ENCODE measurements at regions of chr3 and their contacts with region 1.

Region 1: GRCh38 chr3:36911990-36912804 is 32.7 kb downstream of the TRANK1 start:
- DNase-seq: peak; percentile 66
- H3K4me3 Mint-ChIP-seq: peak overlapping the region; percentile 25
- H3K27ac Mint-ChIP-seq: peak overlapping the region; percentile 41
- H3K4me1 Mint-ChIP-seq: peaks cover 43% of the 10 kb centered on the region
- H3K27me3 Mint-ChIP-seq: no peaks in the 10 kb centered on the region

Region 2: DNA sequence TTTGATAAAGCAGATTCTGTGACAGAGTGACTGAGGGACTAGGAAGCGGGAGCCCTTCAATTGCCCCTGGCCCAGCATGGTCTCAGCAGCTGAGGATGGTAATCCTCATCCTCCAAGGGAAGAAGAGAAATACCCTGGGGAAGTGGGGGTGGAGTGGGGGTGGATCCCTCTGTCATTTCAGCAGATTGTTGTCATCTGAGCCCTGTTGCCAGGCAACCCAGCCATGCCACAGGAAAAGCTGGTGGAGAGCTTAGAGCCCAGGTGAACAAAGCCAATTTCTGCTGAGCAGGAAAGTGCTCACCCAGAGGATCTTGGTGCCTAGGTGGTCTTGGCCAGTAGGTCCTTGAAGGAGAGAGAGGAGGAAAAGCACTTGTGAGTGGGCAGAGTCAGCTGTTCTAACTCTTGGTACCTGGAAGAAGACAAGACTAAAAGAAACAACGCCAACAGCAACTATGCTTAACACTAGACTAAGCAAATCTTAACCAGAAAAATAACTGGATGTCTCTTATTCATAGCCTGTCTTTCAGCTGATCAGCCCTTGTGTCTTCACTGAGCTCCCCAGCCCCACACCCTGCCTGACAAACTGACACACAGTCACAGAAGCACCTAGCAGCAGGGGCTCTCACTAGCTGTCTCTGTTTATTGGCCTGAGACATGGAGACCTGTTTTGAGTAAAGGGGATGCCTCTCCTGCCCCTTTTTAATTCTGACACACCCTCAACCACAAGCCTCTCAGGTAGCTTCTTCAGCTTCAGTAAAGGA is 107.7 kb before region 1 on chr3:
- CTCF ChIA-PET with region 1: no interaction called
- intact Hi-C with region 1: no loop called
- DNase-seq: no peak
- H3K4me3 Mint-ChIP-seq: no peak overlapping the region
- H3K27ac Mint-ChIP-seq: no peak overlapping the region
- H3K4me1 Mint-ChIP-seq: no peaks in the 10 kb centered on the region
- H3K27me3 Mint-ChIP-seq: peaks cover 10% of the 10 kb centered on the region

Region 3: GRCh38 chr3:36843065-36844051 is 68.8 kb before region 1 on chr3:
- CTCF ChIA-PET with region 1: no interaction called
- intact Hi-C with region 1: loop called (anchors 2 kb)
- DNase-seq: peak; percentile 91
- H3K4me3 Mint-ChIP-seq: no peak overlapping the region
- H3K27ac Mint-ChIP-seq: peak overlapping the region; percentile 2
- H3K4me1 Mint-ChIP-seq: peaks cover 17% of the 10 kb centered on the region
- H3K27me3 Mint-ChIP-seq: no peaks in the 10 kb centered on the region

Region 4: GRCh38 chr3:36893137-36893557 is 19.1 kb before region 1 on chr3:
- CTCF ChIA-PET with region 1: interaction called, 5 read pairs
- intact Hi-C with region 1: loop called (anchors 1 kb)
- DNase-seq: peak; percentile 55
- H3K4me3 Mint-ChIP-seq: no peak overlapping the region
- H3K27ac Mint-ChIP-seq: peak overlapping the region; percentile 72
- H3K4me1 Mint-ChIP-seq: peaks cover 41% of the 10 kb centered on the region
- H3K27me3 Mint-ChIP-seq: no peaks in the 10 kb centered on the region

Region 5: DNA sequence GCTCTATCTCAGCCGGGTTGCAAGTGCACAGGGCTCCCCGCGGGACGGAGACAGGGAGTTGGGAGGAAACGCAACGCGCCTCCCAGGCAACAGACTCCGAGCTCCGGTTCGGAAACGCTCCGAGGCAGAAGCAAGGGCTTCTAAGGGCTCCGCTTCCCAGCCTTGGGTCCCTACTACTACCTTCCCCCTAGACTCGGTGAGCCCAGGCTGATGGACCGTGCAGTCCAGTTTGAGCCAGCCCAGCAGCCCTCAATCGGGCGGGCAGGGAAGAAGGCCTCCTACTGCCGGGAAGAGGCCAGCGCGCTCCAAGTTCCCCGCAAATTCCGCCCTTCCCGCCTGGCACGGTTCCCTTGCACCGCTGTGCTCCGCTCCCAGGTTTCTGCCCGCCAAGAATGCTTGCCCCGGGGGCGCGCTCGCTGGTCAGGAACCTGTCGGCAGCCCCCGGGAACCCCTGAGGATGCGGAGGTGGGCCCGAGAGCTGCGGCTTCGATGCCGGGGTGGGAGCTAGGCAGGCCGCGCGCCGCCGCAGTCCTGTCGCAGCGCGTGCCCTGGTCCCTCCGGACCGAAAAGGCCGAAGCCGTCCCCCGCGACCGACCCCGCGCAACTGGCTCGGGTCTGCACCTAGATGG is 31.9 kb after region 1 on chr3:
- CTCF ChIA-PET with region 1: interaction called, 3 read pairs
- intact Hi-C with region 1: loop called (anchors 1 kb)
- DNase-seq: peak; percentile 53
- H3K4me3 Mint-ChIP-seq: peak overlapping the region; percentile 78
- H3K27ac Mint-ChIP-seq: no peak overlapping the region
- H3K4me1 Mint-ChIP-seq: peaks cover 10% of the 10 kb centered on the region
- H3K27me3 Mint-ChIP-seq: no peaks in the 10 kb centered on the region

Region 6: DNA sequence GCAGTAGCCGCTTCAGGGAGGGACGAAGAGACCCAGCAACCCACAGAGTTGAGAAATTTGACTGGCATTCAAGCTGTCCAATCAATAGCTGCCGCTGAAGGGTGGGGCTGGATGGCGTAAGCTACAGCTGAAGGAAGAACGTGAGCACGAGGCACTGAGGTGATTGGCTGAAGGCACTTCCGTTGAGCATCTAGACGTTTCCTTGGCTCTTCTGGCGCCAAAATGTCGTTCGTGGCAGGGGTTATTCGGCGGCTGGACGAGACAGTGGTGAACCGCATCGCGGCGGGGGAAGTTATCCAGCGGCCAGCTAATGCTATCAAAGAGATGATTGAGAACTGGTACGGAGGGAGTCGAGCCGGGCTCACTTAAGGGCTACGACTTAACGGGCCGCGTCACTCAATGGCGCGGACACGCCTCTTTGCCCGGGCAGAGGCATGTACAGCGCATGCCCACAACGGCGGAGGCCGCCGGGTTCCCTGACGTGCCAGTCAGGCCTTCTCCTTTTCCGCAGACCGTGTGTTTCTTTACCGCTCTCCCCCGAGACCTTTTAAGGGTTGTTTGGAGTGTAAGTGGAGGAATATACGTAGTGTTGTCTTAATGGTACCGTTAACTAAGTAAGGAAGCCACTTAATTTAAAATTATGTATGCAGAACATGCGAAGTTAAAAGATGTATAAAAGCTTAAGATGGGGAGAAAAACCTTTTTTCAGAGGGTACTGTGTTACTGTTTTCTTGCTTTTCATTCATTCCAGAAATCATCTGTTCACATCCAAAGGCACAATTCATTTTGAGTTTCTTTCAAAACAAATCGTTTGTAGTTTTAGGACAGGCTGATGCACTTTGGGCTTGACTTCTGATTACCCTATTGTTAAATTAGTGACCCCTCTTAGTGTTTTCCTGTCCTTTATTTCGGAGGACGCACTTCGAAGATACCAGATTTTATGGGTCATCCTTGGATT is 81.4 kb after region 1 on chr3 and contains the start of gene MLH1:
- CTCF ChIA-PET with region 1: no interaction called
- intact Hi-C with region 1: loop called (anchors 1 kb)
- DNase-seq: peak; percentile 100
- H3K4me3 Mint-ChIP-seq: no peak within 1 kb of the TSS
- H3K27ac Mint-ChIP-seq: no peak within 1 kb of the TSS
- H3K4me1 Mint-ChIP-seq: peaks cover 45% of the 10 kb centered on the region
- H3K27me3 Mint-ChIP-seq: no peaks in the 10 kb centered on the region
- total RNA-seq, gene MLH1: 86.6 to 95.3 TPM

Region 7: DNA sequence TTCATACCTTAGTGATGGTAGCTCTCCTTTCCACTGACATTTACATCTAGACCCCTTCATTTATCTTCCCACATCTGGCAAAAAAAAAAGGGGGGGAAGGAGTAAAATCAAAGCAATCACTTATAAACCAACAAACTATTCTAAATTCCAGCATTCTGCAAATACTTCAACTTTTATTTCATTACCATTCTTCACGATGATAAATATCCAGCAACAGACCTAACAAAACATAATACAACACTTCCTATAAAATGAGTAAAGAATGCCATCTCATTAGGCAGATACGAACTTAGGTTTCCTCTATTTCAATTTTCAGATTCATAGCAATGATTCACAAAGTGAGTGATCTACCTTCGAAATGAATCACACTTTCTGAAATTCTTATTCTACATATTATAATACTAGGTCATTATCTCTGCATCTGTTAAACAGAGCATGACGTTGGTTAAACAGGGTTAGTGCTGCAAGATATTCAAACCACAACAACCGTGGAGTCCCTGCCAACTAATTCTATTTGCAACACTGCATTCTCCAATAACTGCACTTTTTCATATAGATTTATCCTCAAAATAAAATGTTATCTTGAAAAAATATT is 262.4 kb after region 1 on chr3 and contains the start of gene LRRFIP2:
- CTCF ChIA-PET with region 1: no interaction called
- intact Hi-C with region 1: loop called (anchors 1 kb)
- DNase-seq: peak; percentile 49
- H3K4me3 Mint-ChIP-seq: peak within 1 kb of the TSS; percentile 82
- H3K27ac Mint-ChIP-seq: peak within 1 kb of the TSS; percentile 50
- H3K4me1 Mint-ChIP-seq: peaks cover 43% of the 10 kb centered on the region
- H3K27me3 Mint-ChIP-seq: no peaks in the 10 kb centered on the region
- total RNA-seq, gene LRRFIP2: 13.3 to 15.3 TPM

Measured in activated naive CD4-positive, alpha-beta T cell treated with anti-CD3 and anti-CD28 coated beads for 36 hours (primary cell).